ENCODE measurements at regions of chr7 and their contacts with region 1.

Region 1: DNA sequence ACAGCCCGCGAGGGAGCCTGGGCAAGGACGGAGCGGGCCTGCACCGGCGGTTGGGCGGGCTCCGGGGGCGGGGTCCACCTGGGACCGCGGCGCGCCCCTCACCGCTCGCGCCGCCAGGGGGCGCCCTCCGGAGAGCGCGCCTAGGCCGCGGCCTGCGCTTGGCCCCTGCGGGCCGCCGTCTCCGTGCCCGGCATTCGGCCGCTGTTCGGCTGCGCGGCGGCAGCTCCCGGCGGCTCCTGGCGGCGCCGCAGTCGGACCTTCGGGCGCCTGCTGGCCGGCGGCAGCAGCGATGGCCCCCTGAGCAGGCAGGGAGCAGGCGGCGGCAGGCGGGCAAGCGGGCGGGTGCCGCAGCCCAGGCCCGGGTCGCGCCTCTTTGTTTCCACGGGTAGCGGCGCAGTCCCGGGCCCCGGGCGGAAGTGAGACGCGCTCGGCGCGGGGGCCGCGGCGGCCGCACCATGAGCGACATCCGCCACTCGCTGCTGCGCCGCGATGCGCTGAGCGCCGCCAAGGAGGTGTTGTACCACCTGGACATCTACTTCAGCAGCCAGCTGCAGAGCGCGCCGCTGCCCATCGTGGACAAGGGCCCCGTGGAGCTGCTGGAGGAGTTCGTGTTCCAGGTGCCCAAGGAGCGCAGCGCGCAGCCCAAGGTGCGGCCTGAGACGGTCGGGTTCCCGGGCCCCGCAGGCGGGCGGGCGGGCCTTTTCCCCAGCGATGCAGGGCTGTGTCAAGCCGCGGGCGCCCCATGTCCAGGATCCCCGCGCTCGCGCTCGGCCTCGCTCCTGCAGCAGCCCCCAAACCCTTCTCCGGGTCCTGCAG is at the start of gene INTS15:
- DNase-seq: peak; percentile 65 to 82
- ATAC-seq: peak; percentile 90 to 92
- H3K4me3 ChIP-seq: peak within 1 kb of the TSS; percentile 77
- H3K27ac ChIP-seq: peak within 1 kb of the TSS; percentile 89 to 92
- H3K4me1 ChIP-seq: peaks cover 11% of the 10 kb centered on the region
- CTCF ChIP-seq: peak; percentile 93
- EP300 ChIP-seq: no peak
- POLR2A ChIP-seq: peak; percentile 75
- RAD21 ChIP-seq: no peak; a peak in 2 of 5 replicates
- polyA plus RNA-seq, gene INTS15: 23.4 and 26.1 TPM in 2 replicates

Region 2: GRCh38 chr7:6577365-6578113 is 12.5 kb before region 1 on chr7 and contains the start of gene ZDHHC4:
- CTCF ChIA-PET with region 1: interaction called, 58 read pairs
- POLR2A ChIA-PET with region 1: interaction called, 15 read pairs
- DNase-seq: peak; percentile 93 to 99
- ATAC-seq: peak; percentile 97
- H3K4me3 ChIP-seq: peak within 1 kb of the TSS; percentile 77
- H3K27ac ChIP-seq: peak within 1 kb of the TSS; percentile 93 to 95
- H3K4me1 ChIP-seq: peaks cover 20% of the 10 kb centered on the region
- CTCF ChIP-seq: no peak
- EP300 ChIP-seq: no peak
- POLR2A ChIP-seq: peak; percentile 97
- RAD21 ChIP-seq: no peak
- polyA plus RNA-seq, gene ZDHHC4: 118 and 149 TPM in 2 replicates

Region 3: DNA sequence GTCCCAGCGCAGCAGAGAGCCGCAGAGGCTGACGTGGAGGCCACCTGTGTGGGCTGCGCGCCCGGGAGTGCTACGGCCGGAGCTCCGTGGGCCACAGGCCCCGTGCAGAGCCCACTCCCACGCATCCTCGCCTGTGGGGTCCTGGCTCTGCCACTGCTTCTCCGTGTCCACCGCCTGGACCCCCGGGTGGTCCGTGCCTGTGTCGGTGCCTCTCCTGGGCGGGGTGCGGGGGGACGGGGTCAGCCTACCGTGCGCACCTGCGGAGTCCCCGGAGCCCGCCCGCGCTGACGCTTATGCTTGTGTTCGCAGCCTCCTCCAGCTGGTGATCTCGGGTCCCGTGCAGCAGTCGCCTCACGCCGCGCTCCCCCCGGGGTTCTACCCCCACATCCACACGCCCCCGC is 17.6 kb after region 1 on chr7:
- CTCF ChIA-PET with region 1: interaction called, 17 read pairs
- POLR2A ChIA-PET with region 1: no interaction called
- DNase-seq: no peak
- ATAC-seq: no peak; a peak in 1 of 6 replicates
- H3K4me3 ChIP-seq: no peak overlapping the region
- H3K27ac ChIP-seq: no peak overlapping the region
- H3K4me1 ChIP-seq: no peaks in the 10 kb centered on the region
- CTCF ChIP-seq: no peak
- EP300 ChIP-seq: no peak
- POLR2A ChIP-seq: no peak
- RAD21 ChIP-seq: no peak

Region 4: DNA sequence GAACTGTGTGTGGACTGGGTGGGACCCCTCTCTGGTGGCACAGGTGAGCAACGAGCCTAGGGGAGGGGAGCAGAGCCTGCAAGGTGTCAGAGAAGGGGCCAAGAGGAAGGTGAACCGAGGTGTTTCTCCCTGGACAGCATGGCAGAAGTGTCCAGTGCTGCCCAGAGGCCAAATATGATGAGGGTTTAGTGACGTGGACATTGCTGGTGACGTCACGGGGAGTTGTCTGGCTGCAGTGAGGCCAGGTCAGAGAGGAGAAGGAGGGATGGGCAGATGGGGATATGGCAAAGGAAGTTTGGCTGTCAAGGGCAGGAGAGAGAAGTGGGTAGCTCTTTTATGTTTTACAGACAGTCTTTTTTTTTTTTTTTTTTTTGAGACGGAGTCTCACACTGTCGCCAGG is 22.8 kb after region 1 on chr7:
- CTCF ChIA-PET with region 1: interaction called, 17 read pairs
- POLR2A ChIA-PET with region 1: no interaction called
- DNase-seq: no peak
- ATAC-seq: no peak
- H3K4me3 ChIP-seq: no peak overlapping the region
- H3K27ac ChIP-seq: no peak overlapping the region
- H3K4me1 ChIP-seq: no peaks in the 10 kb centered on the region
- CTCF ChIP-seq: no peak
- EP300 ChIP-seq: no peak
- POLR2A ChIP-seq: no peak
- RAD21 ChIP-seq: no peak

Region 5: GRCh38 chr7:6658618-6659341 is 68.7 kb after region 1 on chr7:
- CTCF ChIA-PET with region 1: no interaction called
- POLR2A ChIA-PET with region 1: no interaction called
- DNase-seq: no peak
- ATAC-seq: peak; percentile 31 to 59; a peak in 4 of 6 replicates
- H3K4me3 ChIP-seq: no peak overlapping the region
- H3K27ac ChIP-seq: no peak overlapping the region
- H3K4me1 ChIP-seq: no peaks in the 10 kb centered on the region
- CTCF ChIP-seq: no peak
- EP300 ChIP-seq: no peak
- POLR2A ChIP-seq: no peak
- RAD21 ChIP-seq: no peak